Mammary epithelial cell (primary cell): ENCODE measurements at regions of chr5 and their contacts with region 1.

Region 1: GRCh38 chr5:156208271-156208670 is 118.7 kb upstream of the SGCD start:
- DNase-seq: no peak
- H3K4me3 ChIP-seq: no peak overlapping the region
- H3K27ac ChIP-seq: no peak overlapping the region
- H3K4me1 ChIP-seq: no peaks in the 10 kb centered on the region
- H3K27me3 ChIP-seq: no peaks in the 10 kb centered on the region
- CTCF ChIP-seq: no peak

Region 2: GRCh38 chr5:156271569-156271968 is 63.3 kb after region 1 on chr5:
- CTCF ChIA-PET with region 1: no interaction called
- dilution Hi-C with region 1: loop called (anchors 5 kb)
- in situ Hi-C with region 1: no loop called
- intact Hi-C with region 1: no loop called
- DNase-seq: no peak
- H3K4me3 ChIP-seq: no peak overlapping the region
- H3K27ac ChIP-seq: no peak overlapping the region
- H3K4me1 ChIP-seq: no peaks in the 10 kb centered on the region
- H3K27me3 ChIP-seq: no peaks in the 10 kb centered on the region
- CTCF ChIP-seq: no peak